ENCODE measurements at regions of chr9 and their contacts with region 1.

Region 1: DNA sequence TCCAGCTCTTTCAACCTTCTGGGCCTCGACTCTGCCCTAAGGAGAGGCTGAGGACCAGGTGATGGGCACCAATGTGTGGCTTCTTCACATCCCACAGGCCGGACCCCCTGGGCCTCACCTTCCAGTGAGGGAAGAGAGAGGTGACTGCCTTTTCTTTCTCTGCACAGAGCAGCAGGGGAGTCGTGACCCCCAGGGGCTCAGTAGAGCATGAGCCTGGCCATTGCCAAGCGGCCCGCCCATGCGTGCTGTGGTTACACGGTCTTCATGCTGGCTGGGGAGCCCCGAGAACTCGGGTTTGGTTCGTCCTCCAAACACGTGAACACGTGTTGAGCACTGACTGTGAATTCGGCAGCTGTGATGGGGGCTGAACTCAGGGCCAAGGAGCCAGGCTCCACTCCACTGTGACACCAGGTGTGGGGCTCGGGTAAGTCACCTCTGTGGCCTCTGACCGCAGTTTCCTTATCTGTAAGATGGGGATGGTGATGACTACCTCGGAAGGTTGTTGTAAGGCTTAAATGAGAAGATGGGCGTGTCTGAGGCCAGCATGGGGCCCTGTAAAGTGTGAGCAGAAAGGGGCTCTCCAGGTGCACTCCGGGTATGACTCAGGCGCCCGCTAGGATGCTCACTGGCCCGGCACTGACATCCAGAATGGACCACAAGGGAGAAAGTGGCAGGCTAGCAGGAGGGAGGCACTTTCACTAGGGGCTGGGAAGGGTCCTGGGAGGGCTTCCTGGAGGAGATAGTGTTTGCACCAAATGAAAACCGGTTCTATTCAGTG is 13.4 kb upstream of the GRHPR start:
- DNase-seq: peak; percentile 85
- CTCF ChIP-seq: no peak

Region 2: DNA sequence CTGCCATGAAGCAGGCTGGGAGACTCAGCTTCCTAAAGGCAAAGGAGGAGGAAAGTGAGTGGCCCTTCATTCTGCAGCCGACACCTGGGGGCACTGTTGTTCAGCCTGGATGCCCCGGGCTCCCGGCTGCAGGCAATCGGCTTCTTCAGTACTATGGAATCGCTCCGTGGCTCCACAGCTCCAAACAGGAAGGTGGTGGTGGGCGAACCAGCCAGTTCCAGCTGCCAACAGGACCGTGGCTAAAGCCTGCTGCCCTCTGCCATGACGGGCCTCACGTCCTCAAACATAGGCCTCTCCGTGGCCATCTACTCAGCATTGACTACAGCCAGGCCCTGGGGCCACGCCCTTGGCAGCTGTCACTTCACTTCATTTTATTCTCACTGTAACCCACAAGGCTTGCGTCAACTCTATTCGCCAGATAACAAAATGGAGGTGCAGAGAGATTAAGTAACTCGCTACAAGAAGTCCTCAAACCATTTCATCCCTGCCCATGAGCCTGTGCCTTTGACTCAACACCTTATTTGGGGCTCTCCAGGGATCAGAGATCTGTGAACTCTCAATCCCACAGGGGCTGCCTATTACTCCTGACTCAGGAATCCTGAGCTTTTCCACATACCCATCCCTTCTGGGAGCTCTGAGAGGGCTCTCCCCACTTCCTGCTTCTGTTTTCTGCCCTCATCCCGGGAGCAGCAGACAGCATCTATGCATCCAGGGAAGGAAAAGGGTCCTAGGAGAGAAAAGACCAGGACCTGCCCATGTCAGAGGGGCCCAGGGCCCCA is 413.0 kb before region 1 on chr9:
- in situ Hi-C with region 1: loop called (anchors 10 kb)
- DNase-seq: peak; percentile 74
- CTCF ChIP-seq: peak; percentile 73

Region 3: GRCh38 chr9:37036776-37037502 is 372.2 kb before region 1 on chr9:
- in situ Hi-C with region 1: loop called (anchors 10 kb)
- DNase-seq: peak; percentile 71
- CTCF ChIP-seq: no peak

Measured in GM13976 (cell line).